Activated CD8-positive, alpha-beta T cell treated with anti-CD3 and anti-CD28 coated beads, Interleukin-2, amount 10 ng/mL, durations not matched to agents 7 days and 5 days (primary cell): ENCODE measurements at regions of chr12 and their contacts with region 1.

Region 1: DNA sequence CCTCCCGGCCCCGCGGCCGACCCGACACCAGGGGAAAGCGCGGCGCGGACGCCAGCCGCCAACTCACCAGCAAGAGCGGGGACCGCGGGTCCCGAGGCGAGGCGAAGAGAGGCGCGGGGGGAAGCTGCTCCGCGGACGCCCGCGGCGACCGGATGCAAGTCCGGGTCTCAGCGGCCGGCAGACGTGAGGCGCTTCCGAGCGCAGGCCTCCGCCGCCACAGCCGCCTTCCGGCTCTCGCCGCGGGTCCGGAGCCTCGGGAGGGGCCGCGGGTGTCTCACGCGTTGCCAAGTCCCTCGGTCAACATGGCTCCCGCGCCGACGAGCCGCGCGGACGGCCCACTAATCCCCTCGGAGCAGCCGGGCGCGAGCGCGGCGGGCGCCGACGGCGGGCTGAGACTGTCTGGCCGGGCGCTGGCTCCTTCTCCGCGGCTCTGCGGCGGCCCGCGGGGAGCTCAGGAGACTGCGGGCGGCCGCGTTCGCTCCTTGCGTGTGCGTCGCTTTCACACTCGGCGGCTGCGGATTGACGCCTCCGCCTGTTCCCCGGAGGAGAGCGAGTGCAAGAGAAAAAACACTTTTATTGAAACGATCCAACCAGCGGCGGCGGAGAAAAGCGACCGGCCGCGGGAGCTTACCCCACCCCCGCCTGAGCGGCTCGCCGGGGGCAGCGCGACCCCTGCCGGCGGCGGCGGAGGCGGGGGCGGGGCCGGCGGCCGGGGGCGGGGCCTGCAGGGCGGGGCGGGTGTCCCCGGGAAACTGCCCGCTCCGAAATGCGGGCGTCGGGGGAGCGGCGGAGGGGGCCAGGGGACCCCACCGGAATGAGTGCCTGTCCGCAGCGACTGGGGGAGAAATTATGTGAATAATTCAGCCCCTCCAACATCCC is at the start of gene CDK17:
- DNase-seq: peak; percentile 91
- ATAC-seq: peak; percentile 66
- H3K4me3 Mint-ChIP-seq: peak within 1 kb of the TSS; percentile 86
- H3K27ac Mint-ChIP-seq: peak within 1 kb of the TSS; percentile 96
- H3K4me1 Mint-ChIP-seq: peaks cover 50% of the 10 kb centered on the region
- H3K27me3 Mint-ChIP-seq: no peaks in the 10 kb centered on the region
- total RNA-seq, gene CDK17: 38.2 to 39.5 TPM

Region 2: GRCh38 chr12:96047229-96048211 is 352.6 kb before region 1 on chr12:
- CTCF ChIA-PET with region 1: no interaction called
- POLR2A ChIA-PET with region 1: no interaction called
- DNase-seq: no peak
- ATAC-seq: peak; percentile 45
- H3K4me3 Mint-ChIP-seq: peak overlapping the region; percentile 9
- H3K27ac Mint-ChIP-seq: peak overlapping the region; percentile 89
- H3K4me1 Mint-ChIP-seq: peaks cover 43% of the 10 kb centered on the region
- H3K27me3 Mint-ChIP-seq: no peaks in the 10 kb centered on the region

Region 3: GRCh38 chr12:96208801-96209549 is 191.2 kb before region 1 on chr12:
- CTCF ChIA-PET with region 1: interaction called, 13 read pairs
- POLR2A ChIA-PET with region 1: interaction called, 4 read pairs
- DNase-seq: no peak
- ATAC-seq: no peak
- H3K4me3 Mint-ChIP-seq: peak overlapping the region; percentile 24
- H3K27ac Mint-ChIP-seq: peak overlapping the region; percentile 47
- H3K4me1 Mint-ChIP-seq: peaks cover 91% of the 10 kb centered on the region
- H3K27me3 Mint-ChIP-seq: no peaks in the 10 kb centered on the region

Region 4: GRCh38 chr12:96335270-96335669 is 64.9 kb before region 1 on chr12:
- CTCF ChIA-PET with region 1: interaction called, 14 read pairs
- POLR2A ChIA-PET with region 1: interaction called, 16 read pairs
- DNase-seq: no peak
- ATAC-seq: peak; percentile 74
- H3K4me3 Mint-ChIP-seq: peak overlapping the region; percentile 41
- H3K27ac Mint-ChIP-seq: peak overlapping the region; percentile 46
- H3K4me1 Mint-ChIP-seq: peaks cover 34% of the 10 kb centered on the region
- H3K27me3 Mint-ChIP-seq: no peaks in the 10 kb centered on the region

Region 5: DNA sequence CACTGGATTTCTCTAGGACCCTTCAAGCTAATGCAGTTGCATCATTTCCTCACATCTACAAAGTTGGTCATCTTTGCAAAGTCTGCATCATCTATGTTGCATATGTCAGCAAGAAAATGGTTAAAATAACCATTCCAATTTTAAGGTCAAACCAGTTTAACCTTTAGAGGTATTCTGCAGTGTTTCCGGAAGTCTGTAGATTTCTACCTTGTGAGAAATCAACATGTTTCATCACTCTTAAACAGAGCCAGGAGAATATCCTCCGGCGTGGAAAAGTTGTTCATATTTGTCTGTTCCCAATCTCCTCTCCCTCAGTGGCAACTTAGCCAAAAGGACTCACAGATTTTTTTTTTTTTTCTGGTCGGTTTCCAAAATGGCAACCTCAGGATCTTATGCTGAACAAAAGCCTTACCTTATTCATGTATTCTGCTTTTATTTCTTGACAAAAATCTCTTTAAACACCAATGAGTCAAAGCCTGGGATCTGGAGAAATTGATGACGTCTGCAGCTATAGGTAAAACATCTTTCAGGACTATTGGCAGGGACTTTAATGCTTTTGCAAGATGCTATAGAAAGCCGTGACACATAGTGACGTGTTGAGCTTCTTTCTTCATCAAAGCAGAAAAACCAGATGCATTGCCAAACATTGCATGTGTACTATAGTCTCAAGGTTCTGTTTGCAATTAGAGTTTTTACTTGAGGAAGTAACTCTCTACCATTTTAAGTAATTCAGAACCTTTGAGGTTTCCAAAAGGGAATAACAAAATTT is 16.1 kb after region 1 on chr12:
- CTCF ChIA-PET with region 1: interaction called, 29 read pairs
- POLR2A ChIA-PET with region 1: interaction called, 15 read pairs
- DNase-seq: no peak
- ATAC-seq: no peak
- H3K4me3 Mint-ChIP-seq: no peak overlapping the region
- H3K27ac Mint-ChIP-seq: no peak overlapping the region
- H3K4me1 Mint-ChIP-seq: peaks cover 39% of the 10 kb centered on the region
- H3K27me3 Mint-ChIP-seq: no peaks in the 10 kb centered on the region

Region 6: DNA sequence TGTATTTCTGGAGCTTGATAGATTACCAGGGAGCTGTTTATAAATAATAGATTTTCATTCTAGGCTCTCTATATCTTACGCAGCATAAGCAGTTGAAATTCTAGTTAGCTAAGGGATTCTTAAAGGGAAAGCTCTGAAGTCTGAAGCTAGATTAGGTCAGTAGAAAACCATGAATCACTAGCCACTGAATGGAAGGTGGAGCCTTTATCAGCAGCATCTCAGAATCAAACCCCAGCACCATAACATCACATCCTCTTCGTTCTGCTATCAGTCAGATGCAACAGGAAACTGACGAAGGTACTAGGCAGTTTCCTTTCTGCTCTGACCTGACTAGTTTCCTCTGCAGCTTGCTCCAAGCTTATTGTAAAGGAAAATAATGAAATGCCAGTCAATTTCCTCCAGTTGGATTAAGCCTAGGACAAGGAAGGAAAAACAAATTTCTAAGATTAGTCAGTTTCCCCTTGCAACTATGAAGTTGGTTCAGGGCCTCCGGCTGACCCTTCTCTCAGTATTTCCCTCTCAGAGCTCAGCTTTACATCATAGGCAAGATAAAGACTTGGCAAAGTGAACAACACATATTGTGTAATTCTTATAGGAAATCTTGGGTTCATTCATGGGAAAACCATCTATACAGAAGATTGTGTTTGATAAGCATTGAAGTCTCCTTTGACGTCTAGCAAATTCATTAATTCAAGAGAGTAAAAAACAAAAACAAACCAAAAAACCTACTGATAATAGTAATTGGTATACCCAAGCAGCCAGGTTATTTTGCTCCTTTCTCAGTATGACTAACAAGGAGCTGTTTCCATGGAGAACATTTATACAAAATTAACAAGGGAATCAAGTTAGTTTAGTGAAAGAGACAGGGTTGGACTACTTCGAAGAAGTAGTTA is 45.8 kb after region 1 on chr12:
- CTCF ChIA-PET with region 1: interaction called, 41 read pairs
- POLR2A ChIA-PET with region 1: interaction called, 50 read pairs
- DNase-seq: peak; percentile 85
- ATAC-seq: peak; percentile 97
- H3K4me3 Mint-ChIP-seq: peak overlapping the region; percentile 66
- H3K27ac Mint-ChIP-seq: peak overlapping the region; percentile 97
- H3K4me1 Mint-ChIP-seq: peaks cover 54% of the 10 kb centered on the region
- H3K27me3 Mint-ChIP-seq: no peaks in the 10 kb centered on the region

Region 7: GRCh38 chr12:96516472-96517430 is 116.6 kb after region 1 on chr12:
- CTCF ChIA-PET with region 1: interaction called, 85 read pairs
- POLR2A ChIA-PET with region 1: interaction called, 36 read pairs
- DNase-seq: peak; percentile 93
- ATAC-seq: peak; percentile 85
- H3K4me3 Mint-ChIP-seq: peak overlapping the region; percentile 19
- H3K27ac Mint-ChIP-seq: peak overlapping the region; percentile 76
- H3K4me1 Mint-ChIP-seq: peaks cover 20% of the 10 kb centered on the region
- H3K27me3 Mint-ChIP-seq: no peaks in the 10 kb centered on the region